Posterior vena cava (tissue), 2 donors: ENCODE measurements at regions of chr9 and their contacts with region 1.

Region 1: GRCh38 chr9:123217148-123217585 is 51.2 kb downstream of the STRBP start:
- DNase-seq: no peak

Region 2: GRCh38 chr9:122200960-122201595 is 1016.1 kb before region 1 on chr9:
- intact Hi-C with region 1: loop called in 1 of 2 experiments (anchors 5 kb)
- DNase-seq: peak; percentile 81